ENCODE measurements at regions of chrX and their contacts with region 1.

Region 1: GRCh38 chrX:54044126-54044876 is at the start of gene PHF8:
- DNase-seq: peak; percentile 91 to 97 (median 94)
- H3K4me3 ChIP-seq: peak within 1 kb of the TSS; percentile 85
- H3K4me3 Mint-ChIP-seq: peak within 1 kb of the TSS; percentile 89 to 97 (median 94)
- H3K27ac ChIP-seq: peak within 1 kb of the TSS; percentile 81
- H3K27ac Mint-ChIP-seq: peak within 1 kb of the TSS; percentile 96 to 100 (median 98)
- H3K4me1 ChIP-seq: peaks cover 13% of the 10 kb centered on the region
- H3K4me1 Mint-ChIP-seq: peaks cover 24 to 28% (median 27%) of the 10 kb centered on the region in 3 donors
- H3K27me3 ChIP-seq: no peaks in the 10 kb centered on the region
- H3K27me3 Mint-ChIP-seq: peaks cover 0 to 2% of the 10 kb centered on the region in 2 donors
- total RNA-seq, gene PHF8: 42.7 to 45.5 TPM

Region 2: GRCh38 chrX:54066841-54067240 is 22.5 kb after region 1 on chrX:
- CTCF ChIA-PET with region 1: no interaction called
- POLR2A ChIA-PET with region 1: no interaction called
- DNase-seq: no peak
- H3K4me3 ChIP-seq: no peak overlapping the region
- H3K4me3 Mint-ChIP-seq: no peak overlapping the region
- H3K27ac ChIP-seq: no peak overlapping the region
- H3K27ac Mint-ChIP-seq: no peak overlapping the region
- H3K4me1 ChIP-seq: no peaks in the 10 kb centered on the region
- H3K4me1 Mint-ChIP-seq: no peaks in the 10 kb centered on the region
- H3K27me3 ChIP-seq: no peaks in the 10 kb centered on the region
- H3K27me3 Mint-ChIP-seq: peaks cover 0 to 3% of the 10 kb centered on the region in 2 donors

Region 3: GRCh38 chrX:54182864-54183608 is 138.7 kb after region 1 on chrX and contains the start of gene FAM120C:
- CTCF ChIA-PET with region 1: no interaction called
- POLR2A ChIA-PET with region 1: interaction called, 15 read pairs
- DNase-seq: peak; percentile 26 to 71 (median 64)
- H3K4me3 ChIP-seq: peak within 1 kb of the TSS; percentile 49
- H3K4me3 Mint-ChIP-seq: peak within 1 kb of the TSS; percentile 83 to 94 (median 86)
- H3K27ac ChIP-seq: peak within 1 kb of the TSS; percentile 79
- H3K27ac Mint-ChIP-seq: peak within 1 kb of the TSS; percentile 78 to 94 (median 90)
- H3K4me1 ChIP-seq: peaks cover 38% of the 10 kb centered on the region
- H3K4me1 Mint-ChIP-seq: peaks cover 38 to 46% (median 41%) of the 10 kb centered on the region in 3 donors
- H3K27me3 ChIP-seq: no peaks in the 10 kb centered on the region
- H3K27me3 Mint-ChIP-seq: peaks cover 0 to 8% of the 10 kb centered on the region in 2 donors
- total RNA-seq, gene FAM120C: 8.2 to 9.0 TPM

Measured in CD8-positive, alpha-beta memory T cell (primary cell).